ENCODE measurements at regions of chr1 and their contacts with region 1.

Region 1: GRCh38 chr1:53278201-53278725 is 39.9 kb upstream of the MAGOH start:
- DNase-seq: no peak
- H3K4me3 ChIP-seq: no peak overlapping the region
- H3K27ac ChIP-seq: no peak overlapping the region
- H3K4me1 ChIP-seq: no peaks in the 10 kb centered on the region
- H3K27me3 ChIP-seq: no peaks in the 10 kb centered on the region
- CTCF ChIP-seq: peak; percentile 89 to 95 (median 91)

Region 2: GRCh38 chr1:53393325-53393792 is 115.1 kb after region 1 on chr1:
- intact Hi-C with region 1: loop called (anchors 1 kb)
- DNase-seq: peak in 1 of 2 donors; percentile 83
- H3K4me3 ChIP-seq: no peak overlapping the region
- H3K27ac ChIP-seq: no peak overlapping the region
- H3K4me1 ChIP-seq: no peaks in the 10 kb centered on the region
- H3K27me3 ChIP-seq: no peaks in the 10 kb centered on the region
- CTCF ChIP-seq: peak; percentile 85 to 95 (median 86)

Region 3: DNA sequence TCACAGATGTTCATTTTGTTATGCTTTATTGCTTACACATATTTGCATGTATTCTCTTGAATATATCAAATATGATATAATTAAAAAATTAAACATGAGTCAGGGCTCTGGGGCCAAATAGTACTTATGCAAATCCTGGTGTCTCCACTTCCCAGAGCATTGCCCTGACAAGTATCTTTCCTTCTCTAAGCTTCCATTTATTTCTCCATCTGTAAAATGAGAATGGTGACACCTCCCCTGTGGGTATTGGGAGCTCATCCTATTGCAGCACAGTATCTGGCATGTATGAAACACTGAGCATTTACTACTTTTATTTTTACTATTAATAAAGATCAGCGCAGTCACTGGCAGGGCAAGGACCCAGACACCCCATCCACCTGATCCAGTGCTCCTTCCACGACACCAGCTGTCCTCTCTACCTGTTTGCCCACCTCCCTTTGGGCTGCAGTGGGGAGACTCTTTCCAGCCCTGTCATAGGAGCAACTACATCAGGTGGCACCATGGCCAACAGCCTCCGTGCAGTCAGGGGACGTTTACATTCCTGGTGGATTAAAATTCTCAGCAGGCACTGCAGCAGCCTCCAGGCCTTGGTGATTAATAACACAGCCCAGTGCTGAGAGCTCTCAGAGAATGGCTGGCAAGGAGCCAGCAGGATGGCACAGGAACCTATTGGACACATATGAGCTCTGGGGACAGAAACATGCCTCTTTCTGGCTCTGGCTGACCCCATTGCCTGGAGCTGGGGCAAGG is 294.0 kb after region 1 on chr1:
- intact Hi-C with region 1: no loop called
- DNase-seq: no peak
- H3K4me3 ChIP-seq: no peak overlapping the region
- H3K27ac ChIP-seq: no peak overlapping the region
- H3K4me1 ChIP-seq: no peaks in the 10 kb centered on the region
- H3K27me3 ChIP-seq: no peaks in the 10 kb centered on the region
- CTCF ChIP-seq: no peak